ENCODE measurements at regions of chr17 and their contacts with region 1.

Region 1: DNA sequence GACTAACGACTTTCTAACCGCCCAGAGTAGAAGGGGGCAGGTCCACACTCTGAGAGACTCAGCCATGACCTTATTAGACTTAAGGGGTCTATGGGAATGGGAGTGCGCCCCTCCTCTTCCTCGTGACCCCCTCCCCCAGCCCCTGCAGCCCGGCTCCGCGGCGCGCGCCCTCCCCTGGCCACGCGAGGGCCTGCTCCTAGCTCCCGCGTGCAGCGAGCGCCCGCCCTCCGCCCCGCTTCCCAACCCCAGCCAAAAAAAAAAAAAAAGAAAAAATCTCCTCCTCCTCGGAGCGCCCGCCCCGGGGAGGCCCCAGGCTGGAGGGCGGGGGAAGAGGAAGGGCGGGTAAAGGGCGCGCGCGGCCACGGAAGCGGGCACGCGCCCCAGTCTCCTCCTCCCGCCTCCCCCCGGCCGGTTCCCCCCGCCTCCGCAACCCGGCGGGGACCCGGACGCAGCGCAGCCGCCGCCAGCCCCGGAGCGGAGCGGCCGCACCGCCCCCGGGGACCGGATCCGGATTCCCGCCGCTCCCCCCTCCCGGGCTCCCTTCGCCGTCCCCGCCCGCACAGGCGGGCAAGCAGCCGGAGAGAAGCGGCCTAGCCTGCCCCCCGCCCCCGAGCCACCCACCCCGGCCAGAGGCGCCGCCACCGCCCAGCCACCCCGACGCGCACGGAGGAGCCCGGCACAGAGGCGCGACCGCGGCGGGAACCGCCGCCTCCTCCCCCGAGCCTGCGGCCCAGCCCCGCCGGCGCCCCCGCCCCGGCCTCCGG is 949 bp downstream of the UBTF start:
- DNase-seq: peak; percentile 95
- ATAC-seq: peak; percentile 83
- H3K4me3 ChIP-seq: peak overlapping the region; percentile 98
- H3K27ac ChIP-seq: peak overlapping the region; percentile 97
- H3K4me1 ChIP-seq: peaks cover 30% of the 10 kb centered on the region
- H3K27me3 ChIP-seq: no peaks in the 10 kb centered on the region
- CTCF ChIP-seq: peak; percentile 61

Region 2: GRCh38 chr17:44324571-44325275 is 106.2 kb after region 1 on chr17 and contains the start of gene SLC25A39:
- intact Hi-C with region 1: loop called (anchors 5 kb)
- DNase-seq: peak; percentile 98
- ATAC-seq: peak; percentile 93
- H3K4me3 ChIP-seq: peak within 1 kb of the TSS; percentile 97
- H3K27ac ChIP-seq: peak within 1 kb of the TSS; percentile 87
- H3K4me1 ChIP-seq: peaks cover 17% of the 10 kb centered on the region
- H3K27me3 ChIP-seq: no peaks in the 10 kb centered on the region
- CTCF ChIP-seq: no peak
- total RNA-seq, gene SLC25A39: 76.8 TPM